Activated T-helper 1 cell treated with anti-CD3 and anti-CD28 coated beads, Interleukin-12 subunit alpha, Interleukin-12 subunit beta, Interleukin-2, Interleukin-4 antibody, amounts not matched to agents 30 ng/mL and 10 ng/mL and 1 ng/mL, durations not matched to agents 14 hours and 24 hours and 36 hours (primary cell): ENCODE measurements at regions of chr6 and their contacts with region 1.

Region 1: DNA sequence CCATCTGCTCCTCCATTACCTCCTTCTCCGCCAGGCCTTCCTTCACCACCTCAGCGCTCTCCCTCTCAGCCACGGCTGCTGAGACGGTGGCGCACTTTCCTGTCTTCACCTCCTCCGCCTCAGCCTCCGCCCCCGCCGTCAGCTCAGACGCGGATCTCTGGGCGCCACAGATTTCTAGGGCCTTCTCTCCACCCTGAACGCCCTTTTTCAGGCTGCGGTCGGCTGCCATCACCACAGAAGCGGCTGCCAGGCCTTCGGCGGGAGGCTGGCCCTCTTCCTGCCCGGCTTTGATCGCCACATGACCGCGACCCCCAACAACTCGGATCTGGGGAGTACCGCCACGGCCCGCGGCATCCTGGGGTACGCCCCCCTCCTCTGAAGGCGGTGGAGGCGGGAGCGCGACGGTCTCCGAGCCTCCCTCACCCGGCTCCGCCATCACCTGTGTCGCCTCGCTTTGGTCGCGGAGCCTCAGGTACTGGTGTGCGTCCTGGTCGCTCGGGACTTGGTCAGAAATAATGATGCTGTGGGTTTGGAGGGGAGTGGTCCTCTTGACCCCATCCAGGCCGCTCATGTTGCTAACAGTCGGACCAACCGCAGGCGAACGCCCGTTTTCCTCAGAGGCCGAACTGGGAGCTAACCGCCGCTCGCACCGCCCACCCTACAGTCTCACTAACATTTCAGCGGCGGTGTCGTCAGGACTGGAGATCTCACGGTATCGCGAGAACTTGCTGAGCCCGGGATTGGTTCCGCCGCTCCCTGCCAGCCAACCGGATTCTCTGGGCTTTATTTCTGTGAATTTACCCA is at the start of gene TSPYL1:
- DNase-seq: peak; percentile 91
- H3K4me3 Mint-ChIP-seq: peak within 1 kb of the TSS; percentile 91
- H3K27ac Mint-ChIP-seq: peak within 1 kb of the TSS; percentile 95
- H3K4me1 Mint-ChIP-seq: peaks cover 52% of the 10 kb centered on the region
- H3K27me3 Mint-ChIP-seq: peaks cover 2% of the 10 kb centered on the region
- total RNA-seq, gene TSPYL1: 41.8 and 43.5 TPM in 2 replicates

Region 2: DNA sequence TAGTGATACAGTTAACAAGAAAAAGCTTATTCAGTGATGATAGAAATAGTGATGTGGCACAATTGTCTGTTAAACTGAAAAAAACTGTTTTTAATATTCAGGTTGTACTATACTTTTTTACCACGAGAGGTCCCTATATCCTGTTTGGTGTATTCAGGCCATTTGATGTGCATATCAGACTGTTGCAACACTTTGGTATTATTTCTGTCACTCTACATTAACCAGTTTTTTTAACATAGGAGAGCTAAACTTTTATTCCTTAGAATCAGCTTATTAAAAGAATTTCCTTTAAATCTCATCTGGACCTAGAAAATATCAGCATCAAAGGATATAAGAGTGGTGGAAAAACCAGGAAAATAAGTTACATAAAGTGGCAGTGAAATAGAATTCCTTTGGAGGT is 62.4 kb before region 1 on chr6:
- intact Hi-C with region 1: loop called (anchors 5 kb)
- DNase-seq: no peak
- H3K4me3 Mint-ChIP-seq: no peak overlapping the region
- H3K27ac Mint-ChIP-seq: no peak overlapping the region
- H3K4me1 Mint-ChIP-seq: no peaks in the 10 kb centered on the region
- H3K27me3 Mint-ChIP-seq: no peaks in the 10 kb centered on the region

Region 3: DNA sequence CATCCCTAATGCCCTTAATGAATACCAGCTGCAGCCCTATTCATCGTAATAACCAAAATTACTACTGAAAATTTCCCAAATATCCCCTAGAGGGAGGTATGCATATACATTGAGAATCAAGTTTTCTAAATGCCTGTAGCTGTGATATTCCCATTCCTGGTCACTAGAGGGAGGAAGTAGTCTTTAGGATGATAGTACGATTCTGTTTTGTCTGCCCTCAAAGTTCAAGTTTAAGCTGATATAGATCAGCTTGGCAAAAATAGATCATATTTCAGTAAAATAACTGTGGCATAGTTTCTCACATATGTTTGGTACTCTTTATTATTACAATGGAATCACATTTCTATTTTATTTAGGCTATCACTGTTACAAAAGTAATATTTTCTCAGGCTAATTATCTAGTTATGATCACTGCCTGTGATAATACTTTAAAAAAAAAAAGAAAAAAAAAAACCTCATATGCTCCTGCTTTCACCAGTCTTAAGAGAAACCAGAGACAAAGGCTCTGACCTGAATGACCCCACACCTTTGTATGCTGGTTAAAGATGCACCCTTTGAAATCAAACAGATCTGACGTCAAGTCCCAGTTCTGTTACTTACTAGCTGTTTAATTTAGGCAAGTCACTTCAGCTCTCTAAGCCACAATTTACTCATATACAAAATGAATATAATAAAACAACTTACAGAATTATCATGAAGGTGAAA is 10.7 kb before region 1 on chr6:
- intact Hi-C with region 1: loop called (anchors 1 kb)
- DNase-seq: no peak
- H3K4me3 Mint-ChIP-seq: no peak overlapping the region
- H3K27ac Mint-ChIP-seq: no peak overlapping the region
- H3K4me1 Mint-ChIP-seq: peaks cover 6% of the 10 kb centered on the region
- H3K27me3 Mint-ChIP-seq: no peaks in the 10 kb centered on the region

Region 4: GRCh38 chr6:116667623-116668022 is 388.2 kb after region 1 on chr6:
- intact Hi-C with region 1: loop called (anchors 1 kb)
- DNase-seq: no peak
- H3K4me3 Mint-ChIP-seq: peak overlapping the region; percentile 100
- H3K27ac Mint-ChIP-seq: peak overlapping the region; percentile 97
- H3K4me1 Mint-ChIP-seq: peaks cover 45% of the 10 kb centered on the region
- H3K27me3 Mint-ChIP-seq: peaks cover 6% of the 10 kb centered on the region

Region 5: GRCh38 chr6:117674991-117675657 is 1395.7 kb after region 1 on chr6 and contains the start of gene NUS1:
- intact Hi-C with region 1: loop called (anchors 10 kb)
- DNase-seq: peak; percentile 97
- H3K4me3 Mint-ChIP-seq: peak within 1 kb of the TSS; percentile 96
- H3K27ac Mint-ChIP-seq: peak within 1 kb of the TSS; percentile 87
- H3K4me1 Mint-ChIP-seq: peaks cover 49% of the 10 kb centered on the region
- H3K27me3 Mint-ChIP-seq: no peaks in the 10 kb centered on the region
- total RNA-seq, gene NUS1: 49.5 and 52.1 TPM in 2 replicates